Gastrocnemius medialis (tissue), 4 donors: ENCODE measurements at regions of chr9 and their contacts with region 1.

Region 1: DNA sequence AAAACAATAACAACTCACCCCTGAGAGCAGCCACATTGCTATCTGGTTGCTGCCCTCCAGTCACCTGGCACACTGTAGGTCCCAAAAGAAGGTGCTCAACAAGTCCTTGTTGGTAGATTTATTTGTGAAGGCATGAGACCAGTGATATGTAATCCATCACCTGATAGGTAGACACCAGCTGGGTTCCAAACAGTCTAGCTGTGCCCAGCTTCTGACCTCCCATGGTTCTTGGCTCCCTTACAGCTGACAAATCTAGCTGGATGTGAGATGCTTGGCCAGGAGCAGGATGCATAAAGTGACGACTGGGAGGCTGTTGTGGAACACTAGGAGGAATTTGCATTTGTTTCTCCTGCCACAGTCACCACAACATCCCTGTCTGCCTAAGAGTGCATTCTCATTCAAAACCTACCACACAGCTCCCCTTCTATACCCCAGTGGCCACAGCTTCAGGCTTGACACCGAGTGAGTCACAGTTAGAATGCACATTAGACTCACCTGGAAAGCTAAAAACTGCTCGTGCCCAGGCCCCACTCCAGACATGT is 7.8 kb upstream of the VLDLR start:
- DNase-seq: peak in 1 of 2 donors; percentile 29
- ATAC-seq: peak; percentile 55 to 80
- H3K4me3 ChIP-seq: no peak overlapping the region
- H3K27ac ChIP-seq: peak overlapping the region; percentile 29 to 59 (median 45)
- H3K4me1 ChIP-seq: peaks cover 0 to 10% of the 10 kb centered on the region in 2 donors
- H3K27me3 ChIP-seq: no peaks in the 10 kb centered on the region
- CTCF ChIP-seq: no peak
- POLR2A ChIP-seq: no peak

Region 2: DNA sequence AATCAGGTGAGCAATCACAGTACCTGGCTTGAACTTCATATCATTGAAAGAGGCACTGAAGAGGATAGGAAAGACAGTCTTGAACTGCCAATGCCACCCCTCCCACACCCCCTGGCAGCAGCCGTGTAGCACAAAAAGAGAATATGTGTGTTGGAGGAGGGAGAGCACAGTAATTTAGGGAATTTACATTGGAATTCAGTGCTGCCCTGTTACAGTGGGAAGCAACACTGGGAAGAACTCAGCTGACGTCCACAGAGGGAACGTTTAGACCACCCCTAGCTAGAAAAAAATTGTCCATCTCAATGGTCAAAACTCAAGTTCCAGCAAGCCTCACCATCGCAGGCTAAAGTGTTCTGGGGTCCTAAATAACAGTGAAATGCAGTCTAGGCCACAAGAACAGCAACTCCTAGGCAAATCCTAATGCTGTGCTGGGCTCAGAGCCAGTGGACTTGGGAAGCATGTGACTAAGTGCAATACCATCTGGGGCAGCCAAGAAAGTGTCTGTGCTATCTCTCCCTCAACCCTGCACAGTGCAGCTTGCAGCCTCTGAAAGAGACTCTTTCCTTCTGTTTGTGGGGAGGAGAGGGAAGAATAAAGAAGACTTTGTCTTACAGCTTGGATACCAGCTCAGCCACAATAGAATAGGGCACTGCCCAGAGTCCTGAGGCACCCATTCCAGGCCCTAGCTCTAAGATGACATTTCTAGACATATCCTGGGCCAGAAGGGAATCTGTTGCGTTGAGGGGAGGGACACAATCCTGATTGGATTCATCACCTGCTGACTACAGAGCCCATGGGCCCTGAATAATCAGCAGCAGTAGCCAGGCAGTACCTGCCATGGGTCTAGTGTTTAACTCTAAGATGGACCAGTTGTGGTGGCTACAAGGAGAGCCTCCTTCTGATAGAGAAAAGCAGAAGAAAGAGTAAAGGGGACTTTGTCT is 54.3 kb before region 1 on chr9:
- in situ Hi-C with region 1: loop called in 1 of 4 experiments (anchors 10 kb)
- intact Hi-C with region 1: no loop called
- DNase-seq: peak; percentile 59 to 81
- ATAC-seq: peak; percentile 99 to 100
- H3K4me3 ChIP-seq: no peak overlapping the region
- H3K27ac ChIP-seq: peak overlapping the region; percentile 20 to 63 (median 44)
- H3K4me1 ChIP-seq: peaks cover 24% of the 10 kb centered on the region in 2 donors
- H3K27me3 ChIP-seq: no peaks in the 10 kb centered on the region
- CTCF ChIP-seq: no peak
- POLR2A ChIP-seq: no peak

Region 3: GRCh38 chr9:2676466-2676865 is 62.7 kb after region 1 on chr9:
- in situ Hi-C with region 1: loop called in 1 of 4 experiments (anchors 10 kb)
- intact Hi-C with region 1: no loop called
- DNase-seq: no peak
- ATAC-seq: no peak
- H3K4me3 ChIP-seq: no peak overlapping the region
- H3K27ac ChIP-seq: no peak overlapping the region
- H3K4me1 ChIP-seq: peaks cover 6 to 19% of the 10 kb centered on the region in 2 donors
- H3K27me3 ChIP-seq: no peaks in the 10 kb centered on the region
- CTCF ChIP-seq: no peak
- POLR2A ChIP-seq: no peak